CD4-positive, alpha-beta T cell (primary cell): ENCODE measurements at regions of chr11 and their contacts with region 1.

Region 1: GRCh38 chr11:95398437-95399112 is 167.6 kb upstream of the SESN3 start:
- DNase-seq: no peak
- ATAC-seq: no peak
- H3K4me3 ChIP-seq: no peak overlapping the region
- H3K4me3 Mint-ChIP-seq: no peak overlapping the region
- H3K27ac ChIP-seq: no peak overlapping the region
- H3K27ac Mint-ChIP-seq: no peak overlapping the region
- H3K4me1 ChIP-seq: no peaks in the 10 kb centered on the region
- H3K4me1 Mint-ChIP-seq: no peaks in the 10 kb centered on the region
- H3K27me3 ChIP-seq: no peaks in the 10 kb centered on the region
- H3K27me3 Mint-ChIP-seq: no peaks in the 10 kb centered on the region
- CTCF ChIP-seq: no peak

Region 2: DNA sequence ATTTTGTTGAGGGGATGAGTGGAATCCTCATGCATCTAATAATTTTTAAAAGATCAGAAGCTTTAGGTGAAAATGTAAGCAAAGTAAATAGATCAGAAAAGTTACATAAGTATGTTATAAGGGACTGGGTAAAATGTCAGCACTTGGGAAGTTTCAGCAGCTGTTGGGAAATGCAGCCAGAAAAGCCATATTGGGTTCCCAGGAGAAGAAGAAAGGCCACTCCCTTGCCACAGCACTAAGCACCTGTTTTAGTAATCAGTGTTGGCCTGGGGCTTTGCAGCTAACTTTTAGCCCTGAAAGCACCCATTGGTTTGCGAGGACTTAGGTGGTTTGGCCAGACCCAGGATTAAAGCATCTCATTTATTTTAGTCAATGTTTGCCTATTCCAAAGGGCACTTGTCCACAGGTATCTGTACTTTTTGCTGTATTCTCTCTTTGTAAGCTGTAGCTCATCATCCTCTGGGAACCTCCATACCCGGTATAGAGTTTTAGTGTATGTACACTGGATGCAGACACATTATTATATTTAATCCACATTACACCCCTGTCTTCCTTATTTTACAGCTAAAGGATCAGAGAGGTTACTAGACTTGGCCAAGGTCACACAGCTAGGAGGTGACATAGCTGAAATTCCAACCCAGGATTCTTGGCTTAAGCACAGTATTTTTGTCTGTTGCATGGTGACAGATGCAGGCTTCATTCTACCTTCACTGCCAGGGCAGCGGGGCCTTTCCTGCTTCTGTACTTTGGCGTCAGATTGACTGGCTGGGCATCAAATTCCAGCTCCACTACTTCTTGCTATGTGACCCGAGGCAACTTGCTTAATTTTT is 39.8 kb before region 1 on chr11:
- CTCF ChIA-PET with region 1: no interaction called
- POLR2A ChIA-PET with region 1: no interaction called
- intact Hi-C with region 1: no loop called
- DNase-seq: no peak
- ATAC-seq: no peak
- H3K4me3 ChIP-seq: no peak overlapping the region
- H3K4me3 Mint-ChIP-seq: no peak overlapping the region
- H3K27ac ChIP-seq: no peak overlapping the region
- H3K27ac Mint-ChIP-seq: no peak overlapping the region
- H3K4me1 ChIP-seq: no peaks in the 10 kb centered on the region
- H3K4me1 Mint-ChIP-seq: no peaks in the 10 kb centered on the region
- H3K27me3 ChIP-seq: no peaks in the 10 kb centered on the region
- H3K27me3 Mint-ChIP-seq: no peaks in the 10 kb centered on the region
- CTCF ChIP-seq: no peak

Region 3: DNA sequence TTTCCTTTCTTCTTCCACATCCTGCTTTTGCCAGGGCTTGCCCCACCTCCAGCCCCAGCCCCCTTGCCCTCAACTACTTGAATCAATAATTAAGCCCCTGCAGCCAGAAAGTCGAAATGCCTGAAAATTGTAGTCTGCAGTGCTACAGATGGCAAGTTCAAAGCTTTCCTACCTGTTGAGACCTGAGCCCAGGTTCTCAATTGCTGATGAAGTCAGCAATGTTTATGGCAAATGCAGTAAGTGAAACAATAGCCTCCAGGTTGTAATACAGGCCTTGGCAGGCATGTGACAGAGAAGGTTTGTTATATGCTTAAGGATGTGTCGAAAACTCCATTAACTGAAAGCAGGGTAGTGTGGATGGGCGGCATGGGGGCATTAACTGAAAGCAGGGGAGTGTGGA is 13.5 kb after region 1 on chr11:
- CTCF ChIA-PET with region 1: no interaction called
- POLR2A ChIA-PET with region 1: no interaction called
- intact Hi-C with region 1: loop called in 1 of 2 experiments (anchors 1 kb)
- DNase-seq: no peak
- ATAC-seq: no peak
- H3K4me3 ChIP-seq: no peak overlapping the region
- H3K4me3 Mint-ChIP-seq: no peak overlapping the region
- H3K27ac ChIP-seq: no peak overlapping the region
- H3K27ac Mint-ChIP-seq: no peak overlapping the region
- H3K4me1 ChIP-seq: no peaks in the 10 kb centered on the region
- H3K4me1 Mint-ChIP-seq: peaks cover 8% of the 10 kb centered on the region
- H3K27me3 ChIP-seq: no peaks in the 10 kb centered on the region
- H3K27me3 Mint-ChIP-seq: no peaks in the 10 kb centered on the region
- CTCF ChIP-seq: no peak